ENCODE measurements at regions of chr2 and their contacts with region 1.

Region 1: GRCh38 chr2:176445956-176446355 is 176.7 kb downstream of the MTX2 start:
- DNase-seq: no peak
- ATAC-seq: no peak
- H3K4me3 ChIP-seq: no peak overlapping the region
- H3K27ac ChIP-seq: no peak overlapping the region
- H3K4me1 ChIP-seq: peaks cover 0 to 11% (median 0%) of the 10 kb centered on the region in 9 donors
- H3K27me3 ChIP-seq: peaks cover 0 to 3% (median 0%) of the 10 kb centered on the region in 7 donors
- CTCF ChIP-seq: no peak

Region 2: DNA sequence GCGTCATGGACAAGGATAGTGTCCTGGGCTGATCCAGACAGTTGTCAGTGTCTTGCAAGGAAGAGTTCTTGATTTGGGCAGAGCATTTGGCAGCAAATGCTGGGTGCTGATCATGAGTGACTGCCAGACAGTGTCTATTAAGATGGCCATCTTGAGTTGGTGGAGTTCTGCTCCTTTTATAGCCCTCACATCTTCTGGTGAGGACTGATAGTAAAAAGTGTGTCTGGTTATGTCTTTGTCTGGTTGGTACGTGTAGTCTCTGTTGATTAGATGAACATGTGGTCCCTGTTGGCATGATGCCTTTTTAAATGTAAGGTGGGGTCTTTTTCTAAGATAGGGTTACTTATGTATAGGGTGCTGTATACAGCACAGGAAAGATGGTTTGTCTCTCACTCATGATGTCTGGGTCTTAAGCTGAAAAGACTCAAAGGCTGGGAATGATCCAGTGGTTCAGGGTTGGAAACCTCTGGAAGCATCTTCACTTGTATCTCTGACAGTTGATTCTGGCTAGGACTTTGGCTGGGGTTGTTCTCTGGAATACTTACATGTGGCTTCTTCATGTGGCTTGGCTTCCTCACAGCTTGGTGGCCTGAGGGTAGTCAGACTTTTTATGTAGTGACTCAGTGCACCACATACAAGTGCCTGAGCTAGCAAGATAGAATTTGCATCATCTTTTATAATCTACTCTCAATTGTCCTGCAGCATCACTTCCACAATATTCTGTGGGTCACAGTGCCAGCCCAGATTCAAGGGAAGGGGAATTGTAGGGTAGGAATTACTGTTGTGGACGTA is 164.9 kb before region 1 on chr2:
- intact Hi-C with region 1: loop called in 2 of 10 experiments (anchors 10 kb)
- DNase-seq: no peak
- ATAC-seq: no peak
- H3K4me3 ChIP-seq: no peak overlapping the region
- H3K27ac ChIP-seq: no peak overlapping the region
- H3K4me1 ChIP-seq: peaks cover 0 to 29% (median 10%) of the 10 kb centered on the region in 9 donors
- H3K27me3 ChIP-seq: no peaks in the 10 kb centered on the region
- CTCF ChIP-seq: no peak

Region 3: DNA sequence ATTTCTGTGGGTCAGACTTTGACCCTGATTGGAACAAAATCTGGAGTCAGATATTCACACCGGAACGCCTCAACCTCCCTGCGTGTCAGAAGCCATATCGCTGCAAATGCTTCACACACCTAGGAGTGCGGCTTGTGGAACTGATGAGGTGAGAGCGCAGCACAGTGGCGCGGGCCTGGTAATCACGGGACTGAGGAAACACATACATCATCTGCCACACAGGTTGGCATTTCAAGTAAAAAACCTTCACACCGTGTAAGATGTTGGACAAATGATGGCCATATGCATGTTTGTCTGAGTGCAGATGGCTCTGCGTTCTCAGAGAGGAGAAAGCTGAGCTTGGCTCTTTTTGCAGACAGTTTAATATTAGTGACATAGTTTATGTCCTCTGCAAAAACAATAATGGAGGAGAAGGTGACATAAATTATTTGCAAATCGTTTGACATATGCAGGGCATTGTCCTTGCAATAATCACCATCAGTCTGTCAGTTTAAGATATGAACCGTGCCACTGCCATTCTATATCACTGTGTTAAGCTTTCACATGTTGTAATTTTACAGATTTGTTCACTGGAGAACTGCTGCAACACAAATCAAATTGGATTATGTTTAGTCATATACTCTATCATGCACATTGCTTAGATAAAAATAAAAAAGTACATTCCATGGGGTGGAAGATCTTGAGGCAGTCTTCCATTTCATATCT is 75.3 kb before region 1 on chr2:
- intact Hi-C with region 1: no loop called
- DNase-seq: no peak
- ATAC-seq: no peak
- H3K4me3 ChIP-seq: no peak overlapping the region
- H3K27ac ChIP-seq: no peak overlapping the region
- H3K4me1 ChIP-seq: no peaks in the 10 kb centered on the region
- H3K27me3 ChIP-seq: peaks cover 0 to 5% (median 0%) of the 10 kb centered on the region in 7 donors
- CTCF ChIP-seq: no peak

Region 4: GRCh38 chr2:176483901-176484568 is 38.1 kb after region 1 on chr2:
- intact Hi-C with region 1: no loop called
- DNase-seq: no peak
- ATAC-seq: no peak
- H3K4me3 ChIP-seq: no peak overlapping the region
- H3K27ac ChIP-seq: no peak overlapping the region
- H3K4me1 ChIP-seq: peaks cover 0 to 7% (median 0%) of the 10 kb centered on the region in 9 donors
- H3K27me3 ChIP-seq: peaks cover 0 to 24% (median 6%) of the 10 kb centered on the region in 7 donors
- CTCF ChIP-seq: no peak

Measured in heart right ventricle (tissue), 16 donors.